Activated CD4-positive, alpha-beta memory T cell treated with anti-CD3 and anti-CD28 coated beads, Interleukin-2, amount 10 ng/mL, durations not matched to agents 7 days and 5 days (primary cell): ENCODE measurements at regions of chr5 and their contacts with region 1.

Region 1: GRCh38 chr5:134911285-134912206 is 6.6 kb downstream of the PCBD2 start:
- DNase-seq: no peak
- H3K4me3 Mint-ChIP-seq: no peak overlapping the region
- H3K27ac Mint-ChIP-seq: no peak overlapping the region
- H3K4me1 Mint-ChIP-seq: peaks cover 25% of the 10 kb centered on the region
- H3K27me3 Mint-ChIP-seq: no peaks in the 10 kb centered on the region

Region 2: DNA sequence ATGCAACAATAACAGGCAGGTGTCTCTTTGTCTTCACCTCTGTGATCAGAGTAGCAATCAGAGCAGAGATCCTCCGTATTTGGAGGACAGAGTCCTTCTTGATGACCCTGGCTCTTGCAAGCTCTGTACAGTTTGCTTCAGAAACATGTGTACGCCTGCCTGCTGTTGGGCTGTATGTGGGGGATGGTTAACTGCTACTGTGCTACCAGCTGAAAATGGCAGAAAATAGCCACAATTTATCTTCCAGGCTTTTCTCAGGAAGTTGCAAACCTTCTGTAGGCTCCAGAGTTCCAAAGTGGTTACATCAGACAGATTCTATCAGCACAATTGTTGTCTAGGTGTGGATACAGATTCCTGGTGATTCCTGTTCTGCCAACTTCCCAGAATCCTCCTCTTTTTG is 117.5 kb before region 1 on chr5:
- CTCF ChIA-PET with region 1: no interaction called
- POLR2A ChIA-PET with region 1: no interaction called
- DNase-seq: no peak
- H3K4me3 Mint-ChIP-seq: no peak overlapping the region
- H3K27ac Mint-ChIP-seq: no peak overlapping the region
- H3K4me1 Mint-ChIP-seq: no peaks in the 10 kb centered on the region
- H3K27me3 Mint-ChIP-seq: no peaks in the 10 kb centered on the region

Region 3: DNA sequence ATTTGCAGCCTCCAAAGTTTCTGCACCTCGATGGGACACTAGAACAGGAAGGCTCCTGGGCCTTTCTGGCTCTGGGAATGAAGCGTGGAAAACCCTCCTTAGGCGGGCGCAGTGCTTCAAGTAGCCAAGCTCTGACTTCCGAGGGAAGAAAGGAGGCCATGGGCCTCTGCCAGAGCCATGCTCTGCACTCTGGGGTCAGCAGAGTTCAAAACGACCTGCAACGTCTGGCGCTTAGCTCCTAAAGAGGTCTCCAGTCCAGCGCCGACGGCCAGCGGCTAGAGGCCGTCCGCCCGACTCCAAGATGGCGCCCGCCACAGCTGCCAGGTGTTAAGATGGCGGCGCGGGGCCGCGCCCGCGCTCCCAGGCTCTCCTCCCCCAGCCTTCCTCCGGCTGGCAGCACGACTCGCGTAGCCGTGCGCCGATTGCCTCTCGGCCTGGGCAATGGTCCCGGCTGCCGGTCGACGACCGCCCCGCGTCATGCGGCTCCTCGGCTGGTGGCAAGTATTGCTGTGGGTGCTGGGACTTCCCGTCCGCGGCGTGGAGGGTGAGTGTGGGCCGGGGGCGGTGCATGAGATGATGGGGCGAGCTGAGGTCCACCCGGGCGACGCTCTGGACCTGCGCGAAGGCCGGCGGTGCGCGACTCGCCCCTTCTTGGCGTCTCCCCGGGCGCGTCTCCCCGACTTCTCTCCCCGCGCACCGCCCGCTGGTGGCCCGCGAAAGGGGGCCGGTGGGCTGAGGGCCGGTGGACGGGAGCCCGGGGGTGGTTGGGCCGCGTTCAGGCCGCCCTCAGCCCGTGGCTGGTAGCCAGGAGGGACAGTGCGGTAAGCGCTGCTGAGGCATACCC is 37.3 kb before region 1 on chr5 and contains the start of gene TXNDC15:
- CTCF ChIA-PET with region 1: no interaction called
- POLR2A ChIA-PET with region 1: interaction called, 83 read pairs
- DNase-seq: peak; percentile 86
- H3K4me3 Mint-ChIP-seq: peak within 1 kb of the TSS; percentile 95
- H3K27ac Mint-ChIP-seq: peak within 1 kb of the TSS; percentile 95
- H3K4me1 Mint-ChIP-seq: peaks cover 42% of the 10 kb centered on the region
- H3K27me3 Mint-ChIP-seq: no peaks in the 10 kb centered on the region
- total RNA-seq, gene TXNDC15: 51.0 to 56.9 TPM